ENCODE measurements at regions of chr5 and their contacts with region 1.

Region 1: GRCh38 chr5:94849821-94850736 is 231.6 kb downstream of the SLF1 start:
- DNase-seq: peak; percentile 16
- ATAC-seq: peak; percentile 92
- H3K4me3 ChIP-seq: no peak overlapping the region
- H3K27ac ChIP-seq: no peak overlapping the region
- H3K4me1 ChIP-seq: no peaks in the 10 kb centered on the region
- H3K27me3 ChIP-seq: no peaks in the 10 kb centered on the region
- CTCF ChIP-seq: peak; percentile 68 to 79 (median 74)
- EP300 ChIP-seq: no peak
- POLR2A ChIP-seq: no peak
- RAD21 ChIP-seq: peak; percentile 99

Region 2: GRCh38 chr5:94281402-94281801 is 568.7 kb before region 1 on chr5:
- CTCF ChIA-PET with region 1: no interaction called
- POLR2A ChIA-PET with region 1: no interaction called
- RAD21 ChIA-PET with region 1: no interaction called
- SMC1A ChIA-PET with region 1: no interaction called
- in situ Hi-C with region 1: no loop called
- intact Hi-C with region 1: no loop called
- DNase-seq: no peak
- ATAC-seq: no peak
- H3K4me3 ChIP-seq: no peak overlapping the region
- H3K27ac ChIP-seq: no peak overlapping the region
- H3K4me1 ChIP-seq: no peaks in the 10 kb centered on the region
- H3K27me3 ChIP-seq: no peaks in the 10 kb centered on the region
- CTCF ChIP-seq: no peak
- EP300 ChIP-seq: no peak
- POLR2A ChIP-seq: no peak
- RAD21 ChIP-seq: no peak

Region 3: GRCh38 chr5:94618493-94619328 is 231.4 kb before region 1 on chr5 and contains the starts of genes KIAA0825 and SLF1:
- CTCF ChIA-PET with region 1: interaction called, 4 read pairs
- POLR2A ChIA-PET with region 1: no interaction called
- RAD21 ChIA-PET with region 1: interaction called, 7 read pairs
- SMC1A ChIA-PET with region 1: interaction called, 4 read pairs
- in situ Hi-C with region 1: no loop called
- intact Hi-C with region 1: loop called (anchors 5 kb)
- DNase-seq: peak; percentile 39
- ATAC-seq: peak; percentile 94
- H3K4me3 ChIP-seq: peak within 1 kb of the TSS; percentile 79
- H3K27ac ChIP-seq: peak within 1 kb of the TSS; percentile 45
- H3K4me1 ChIP-seq: peaks cover 3% of the 10 kb centered on the region
- H3K27me3 ChIP-seq: no peaks in the 10 kb centered on the region
- CTCF ChIP-seq: no peak
- EP300 ChIP-seq: no peak
- POLR2A ChIP-seq: peak; percentile 80
- RAD21 ChIP-seq: no peak
- polyA plus RNA-seq, gene KIAA0825: 0.90 to 1.9 TPM
- polyA plus RNA-seq, gene SLF1: 14.1 to 27.0 TPM

Region 4: DNA sequence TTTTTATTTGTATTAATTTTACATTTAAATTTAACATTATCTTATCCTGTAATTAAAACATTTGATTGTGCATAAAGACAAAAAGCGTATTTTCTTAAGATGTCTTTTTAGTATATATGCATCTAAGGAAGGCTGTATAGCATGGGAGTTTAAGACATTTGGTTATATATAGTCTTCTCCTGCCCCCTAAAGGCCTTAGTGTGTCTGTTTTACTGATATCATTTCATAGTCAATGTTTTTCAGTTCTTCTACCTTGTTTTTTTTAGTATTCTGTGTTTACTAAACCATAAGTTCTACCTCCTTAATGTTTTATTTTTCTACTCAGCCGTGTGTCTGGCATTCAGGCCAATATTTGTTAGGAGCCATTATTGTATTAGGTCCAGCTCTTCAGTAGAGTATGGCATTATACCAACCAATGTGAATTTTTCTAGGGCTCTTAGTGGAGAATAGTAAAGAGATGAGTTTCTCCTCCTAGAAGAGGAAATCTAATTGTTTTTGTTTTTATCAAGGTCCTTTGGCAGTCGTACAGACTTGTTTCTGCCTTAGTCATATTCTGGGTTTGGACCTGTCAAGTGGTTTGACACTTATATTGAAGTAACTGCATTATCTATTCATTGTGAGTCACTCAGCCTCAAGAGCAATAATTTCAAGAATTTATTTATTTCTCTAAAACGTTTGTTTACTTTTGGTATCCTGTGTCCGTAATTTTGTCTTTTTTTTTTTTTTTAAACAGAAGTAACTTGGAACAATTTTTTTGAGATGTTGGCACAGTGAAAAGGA is 156.8 kb before region 1 on chr5:
- CTCF ChIA-PET with region 1: interaction called, 11 read pairs
- POLR2A ChIA-PET with region 1: no interaction called
- RAD21 ChIA-PET with region 1: no interaction called
- SMC1A ChIA-PET with region 1: interaction called, 3 read pairs
- in situ Hi-C with region 1: no loop called
- intact Hi-C with region 1: no loop called
- DNase-seq: no peak
- ATAC-seq: peak; percentile 86
- H3K4me3 ChIP-seq: no peak overlapping the region
- H3K27ac ChIP-seq: no peak overlapping the region
- H3K4me1 ChIP-seq: no peaks in the 10 kb centered on the region
- H3K27me3 ChIP-seq: no peaks in the 10 kb centered on the region
- CTCF ChIP-seq: peak in 2 of 3 experiments; percentile 36 to 63; a peak in 3 of 6 replicates
- EP300 ChIP-seq: no peak
- POLR2A ChIP-seq: no peak
- RAD21 ChIP-seq: peak; percentile 62

Region 5: GRCh38 chr5:94700592-94700991 is 149.5 kb before region 1 on chr5:
- CTCF ChIA-PET with region 1: interaction called, 5 read pairs
- POLR2A ChIA-PET with region 1: no interaction called
- RAD21 ChIA-PET with region 1: no interaction called
- SMC1A ChIA-PET with region 1: interaction called, 5 read pairs
- in situ Hi-C with region 1: no loop called
- intact Hi-C with region 1: loop called (anchors 5 kb)
- DNase-seq: peak; percentile 33
- ATAC-seq: peak; percentile 82
- H3K4me3 ChIP-seq: no peak overlapping the region
- H3K27ac ChIP-seq: peak overlapping the region; percentile 18; the same call in 1 of the 2 replicates
- H3K4me1 ChIP-seq: peaks cover 19% of the 10 kb centered on the region; the same call in 1 of the 2 replicates
- H3K27me3 ChIP-seq: no peaks in the 10 kb centered on the region
- CTCF ChIP-seq: no peak
- EP300 ChIP-seq: peak in 1 of 2 experiments; percentile 48; a peak in 2 of 4 replicates
- POLR2A ChIP-seq: no peak
- RAD21 ChIP-seq: no peak

Region 6: GRCh38 chr5:94830520-94830919 is 19.6 kb before region 1 on chr5:
- CTCF ChIA-PET with region 1: interaction called, 21 read pairs
- POLR2A ChIA-PET with region 1: interaction called, 4 read pairs
- RAD21 ChIA-PET with region 1: interaction called, 5 read pairs
- SMC1A ChIA-PET with region 1: interaction called, 8 read pairs
- in situ Hi-C with region 1: no loop called
- intact Hi-C with region 1: no loop called
- DNase-seq: no peak
- ATAC-seq: peak; percentile 68
- H3K4me3 ChIP-seq: no peak overlapping the region
- H3K27ac ChIP-seq: no peak overlapping the region
- H3K4me1 ChIP-seq: no peaks in the 10 kb centered on the region
- H3K27me3 ChIP-seq: no peaks in the 10 kb centered on the region
- CTCF ChIP-seq: peak; percentile 23 to 42 (median 32); a peak in 5 of 6 replicates
- EP300 ChIP-seq: no peak
- POLR2A ChIP-seq: no peak
- RAD21 ChIP-seq: peak; percentile 26; the same call in 1 of the 2 replicates

Measured in GM12878 (cell line).